ENCODE measurements at regions of chr5 and their contacts with region 1.

Region 1: DNA sequence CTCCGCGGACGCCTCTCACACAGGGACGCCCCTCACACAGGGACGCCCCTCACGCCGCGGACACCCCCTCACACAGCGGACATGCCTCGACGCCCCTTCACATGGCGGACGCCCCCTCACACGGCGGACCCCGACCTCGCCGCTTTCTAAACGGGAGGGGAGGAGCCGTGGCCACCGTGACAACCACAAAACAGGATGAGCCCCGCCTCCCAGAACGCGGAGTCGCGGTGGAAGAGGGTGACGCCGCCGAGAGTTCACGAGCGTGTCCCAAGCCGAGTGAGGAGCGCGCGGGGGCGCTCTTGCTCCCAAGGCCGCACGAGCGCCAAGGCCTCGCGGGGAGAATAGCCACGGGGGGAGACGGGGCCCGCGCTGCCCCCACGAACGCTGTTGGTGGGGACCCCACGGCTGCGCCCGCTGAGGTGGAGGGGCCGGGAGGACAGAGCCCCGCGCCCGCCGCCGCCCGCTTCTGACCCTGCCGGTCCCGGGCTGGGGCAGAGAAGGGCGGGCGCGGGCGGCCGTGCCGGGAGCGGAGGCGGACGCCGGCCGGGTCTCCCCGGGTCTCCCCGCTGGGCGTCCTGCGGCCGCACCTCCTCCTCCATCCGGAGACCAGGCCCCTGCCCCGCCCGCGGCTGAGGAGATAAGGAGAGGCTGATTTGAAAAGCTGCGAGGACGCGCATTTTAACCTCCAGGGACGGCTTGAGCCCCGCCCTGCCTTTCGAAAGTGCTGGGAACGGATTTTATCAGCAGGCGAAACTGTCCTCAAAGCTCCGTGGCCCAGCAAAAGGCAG is 3.9 kb upstream of the NKD2 start:
- DNase-seq: no peak
- H3K4me3 Mint-ChIP-seq: peak overlapping the region; percentile 63
- H3K27ac Mint-ChIP-seq: no peak overlapping the region
- H3K4me1 Mint-ChIP-seq: peaks cover 20% of the 10 kb centered on the region
- H3K27me3 Mint-ChIP-seq: peaks cover 87% of the 10 kb centered on the region
- CTCF ChIP-seq: no peak

Region 2: GRCh38 chr5:945691-946551 is 58.7 kb before region 1 on chr5:
- CTCF ChIA-PET with region 1: interaction called, 5 read pairs
- intact Hi-C with region 1: loop called (anchors 10 kb)
- DNase-seq: no peak
- H3K4me3 Mint-ChIP-seq: no peak overlapping the region
- H3K27ac Mint-ChIP-seq: no peak overlapping the region
- H3K4me1 Mint-ChIP-seq: no peaks in the 10 kb centered on the region
- H3K27me3 Mint-ChIP-seq: peaks cover 82% of the 10 kb centered on the region
- CTCF ChIP-seq: no peak

Measured in Calu3 (cell line).